ENCODE measurements at regions of chr14 and their contacts with region 1.

Region 1: GRCh38 chr14:94485944-94486841 is 10.2 kb upstream of the SERPINA9 start:
- DNase-seq: peak in 4 of 5 donors; percentile 19 to 52 (median 40)
- ATAC-seq: peak; percentile 20 to 77 (median 72)
- H3K4me3 ChIP-seq: no peak overlapping the region
- H3K27ac ChIP-seq: no peak overlapping the region
- H3K4me1 ChIP-seq: peaks cover 0 to 9% (median 6%) of the 10 kb centered on the region in 12 donors
- H3K27me3 ChIP-seq: peaks cover 0 to 36% (median 12%) of the 10 kb centered on the region in 9 donors
- CTCF ChIP-seq: peak; percentile 94 to 100 (median 98)
- POLR2A ChIP-seq: no peak

Region 2: GRCh38 chr14:94036313-94037050 is 449.7 kb before region 1 on chr14:
- intact Hi-C with region 1: loop called in 4 of 10 experiments (anchors 5 to 10 kb)
- DNase-seq: peak; percentile 62 to 77 (median 72)
- ATAC-seq: peak; percentile 78 to 92 (median 84)
- H3K4me3 ChIP-seq: no peak overlapping the region
- H3K27ac ChIP-seq: no peak overlapping the region
- H3K4me1 ChIP-seq: peaks cover 0 to 16% (median under 1%) of the 10 kb centered on the region in 12 donors
- H3K27me3 ChIP-seq: no peaks in the 10 kb centered on the region
- CTCF ChIP-seq: peak; percentile 76 to 90 (median 86)
- POLR2A ChIP-seq: no peak

Region 3: DNA sequence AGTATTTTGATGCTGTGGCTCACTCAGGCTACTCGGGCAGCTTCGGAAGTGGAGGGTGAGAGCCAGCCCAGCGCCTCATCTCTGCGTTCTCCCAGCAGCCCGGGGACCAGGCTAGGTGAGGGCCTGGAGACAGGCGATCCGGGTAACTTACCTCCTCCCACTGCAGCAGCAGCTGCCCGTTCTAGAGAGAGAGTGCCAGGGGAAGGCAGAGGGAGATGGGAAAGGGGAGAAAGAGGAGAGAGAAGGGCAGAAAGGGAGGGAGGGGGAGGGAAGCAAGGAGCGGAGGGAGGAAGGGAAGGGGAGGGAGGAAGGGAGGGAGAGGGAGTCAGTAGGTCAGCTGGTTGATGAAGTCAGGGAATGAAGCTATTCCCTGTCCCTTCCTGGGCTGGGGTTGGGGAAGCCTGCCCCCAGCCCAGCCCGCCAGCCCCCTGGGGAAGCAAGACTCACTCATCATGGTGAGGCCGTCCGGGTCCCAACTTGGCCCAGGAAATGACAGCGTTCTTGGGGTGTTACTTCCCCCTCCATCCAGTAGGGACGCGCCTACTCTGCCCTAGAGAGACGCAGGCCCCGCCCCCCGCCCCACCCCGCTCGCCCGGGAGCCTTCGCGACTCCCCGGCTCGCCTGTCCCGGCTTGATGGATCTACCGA is 357.0 kb before region 1 on chr14 and contains the start of gene IFI27L2:
- intact Hi-C with region 1: loop called in 3 of 10 experiments (anchors 5 to 10 kb)
- DNase-seq: peak; percentile 83 to 87 (median 86)
- ATAC-seq: peak; percentile 88 to 97 (median 94)
- H3K4me3 ChIP-seq: peak within 1 kb of the TSS; percentile 3 to 73 (median 60)
- H3K27ac ChIP-seq: peak within 1 kb of the TSS; percentile 36 to 88 (median 78)
- H3K4me1 ChIP-seq: peaks cover 0 to 18% (median 8%) of the 10 kb centered on the region in 12 donors
- H3K27me3 ChIP-seq: no peaks in the 10 kb centered on the region
- CTCF ChIP-seq: peak in 11 of 12 donors; percentile 21 to 55 (median 33)
- POLR2A ChIP-seq: peak in 1 of 2 donors; percentile 42
- total RNA-seq, gene IFI27L2: 44.8 to 102 (median 61.4) TPM

Region 4: GRCh38 chr14:94355191-94355797 is 130.9 kb before region 1 on chr14:
- intact Hi-C with region 1: loop called in 4 of 10 experiments (anchors 1 to 10 kb)
- DNase-seq: peak in 2 of 5 donors; percentile 42 to 45
- ATAC-seq: peak in 1 of 4 donors; percentile 49
- H3K4me3 ChIP-seq: no peak overlapping the region
- H3K27ac ChIP-seq: no peak overlapping the region
- H3K4me1 ChIP-seq: no peaks in the 10 kb centered on the region
- H3K27me3 ChIP-seq: peaks cover 0 to 33% (median 8%) of the 10 kb centered on the region in 9 donors
- CTCF ChIP-seq: peak in 9 of 12 donors; percentile 8 to 38 (median 23)
- POLR2A ChIP-seq: no peak

Region 5: GRCh38 chr14:94423453-94424056 is 62.6 kb before region 1 on chr14:
- intact Hi-C with region 1: loop called in 2 of 10 experiments (anchors 5 kb)
- DNase-seq: peak; percentile 27 to 75 (median 49)
- ATAC-seq: peak in 1 of 4 donors; percentile 48
- H3K4me3 ChIP-seq: no peak overlapping the region
- H3K27ac ChIP-seq: no peak overlapping the region
- H3K4me1 ChIP-seq: no peaks in the 10 kb centered on the region
- H3K27me3 ChIP-seq: peaks cover 0 to 54% (median 11%) of the 10 kb centered on the region in 9 donors
- CTCF ChIP-seq: peak in 11 of 12 donors; percentile 35 to 63 (median 49)
- POLR2A ChIP-seq: no peak

Region 6: DNA sequence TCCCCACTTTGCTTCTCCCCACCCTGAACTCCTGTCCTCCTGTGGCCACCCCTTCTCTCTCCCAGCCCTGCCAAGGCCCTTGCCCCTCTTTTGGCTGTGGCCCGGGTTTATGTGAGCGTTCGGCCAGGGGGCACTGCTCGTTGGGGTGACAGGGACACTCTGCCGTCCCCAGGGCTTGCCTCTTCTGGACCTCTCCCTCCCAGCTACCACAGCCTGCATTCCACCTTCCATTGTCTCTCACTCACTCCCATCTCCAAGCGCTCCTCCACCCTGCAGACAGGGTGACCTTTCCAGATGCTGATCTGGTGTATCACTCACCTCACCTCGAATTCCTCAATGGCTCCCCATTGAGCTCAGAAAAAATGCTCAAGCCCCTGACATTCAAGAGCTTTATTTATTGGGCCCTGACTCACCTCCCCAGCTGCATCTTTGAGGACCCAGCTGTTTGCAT is 11.6 kb before region 1 on chr14:
- intact Hi-C with region 1: no loop called
- DNase-seq: no peak
- ATAC-seq: no peak
- H3K4me3 ChIP-seq: no peak overlapping the region
- H3K27ac ChIP-seq: no peak overlapping the region
- H3K4me1 ChIP-seq: no peaks in the 10 kb centered on the region
- H3K27me3 ChIP-seq: peaks cover 0 to 17% (median 0%) of the 10 kb centered on the region in 9 donors
- CTCF ChIP-seq: no peak
- POLR2A ChIP-seq: no peak

Measured in heart left ventricle (tissue), 16 donors.